ENCODE measurements at regions of chr4 and their contacts with region 1.

Region 1: DNA sequence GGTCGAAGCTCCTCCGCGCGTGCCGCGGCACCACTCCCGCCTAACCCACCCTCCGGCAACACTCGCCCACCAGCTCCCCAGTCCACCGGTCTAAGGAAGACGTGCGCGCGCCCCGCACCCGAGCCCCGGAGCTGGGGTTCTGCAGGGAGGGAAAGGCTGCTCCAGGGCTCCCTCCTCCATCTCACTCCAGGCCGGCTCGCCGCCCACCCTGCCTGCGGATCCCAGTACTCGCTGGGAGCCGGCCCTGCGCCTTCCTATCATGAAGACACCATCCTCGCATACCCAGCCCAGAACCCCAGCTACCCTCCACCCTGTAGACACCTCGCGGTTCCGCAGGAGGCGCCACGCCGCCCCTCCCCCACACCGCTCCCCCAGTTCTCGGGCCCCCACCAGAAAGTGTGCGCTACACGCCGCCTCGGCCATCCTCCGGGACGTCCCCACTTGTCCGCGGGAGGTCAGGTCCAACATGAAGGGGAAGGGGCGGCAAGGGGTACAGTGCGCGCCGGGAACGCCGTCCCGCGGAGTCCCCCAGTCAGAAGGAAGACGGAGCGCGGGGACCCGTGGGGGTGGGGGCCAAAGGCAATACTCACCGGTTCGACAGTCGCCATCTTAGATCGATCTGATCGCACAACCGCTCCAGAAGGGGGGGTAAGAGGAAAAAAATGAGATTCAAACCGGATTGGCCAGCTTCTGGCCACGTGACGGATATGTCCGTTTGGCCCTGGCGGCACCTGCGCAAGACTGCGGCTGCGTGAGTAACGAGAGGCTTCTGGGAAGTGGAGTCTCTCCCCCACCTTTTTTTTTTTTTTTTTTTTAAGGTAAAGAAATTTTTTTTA is at the start of gene EIF4E:
- DNase-seq: peak; percentile 99
- H3K4me3 ChIP-seq: peak within 1 kb of the TSS; percentile 59 to 98 (median 96)
- H3K27ac ChIP-seq: peak within 1 kb of the TSS; percentile 88 to 98 (median 95)
- H3K4me1 ChIP-seq: peaks cover 0 to 30% (median 22%) of the 10 kb centered on the region in 4 donors
- H3K27me3 ChIP-seq: no peaks in the 10 kb centered on the region
- CTCF ChIP-seq: peak in 3 of 4 experiments; percentile 2 to 17 (median 13)
- EP300 ChIP-seq: peak in 1 of 4 donors; percentile 17
- POLR2A ChIP-seq: no peak
- total RNA-seq, gene EIF4E: 38.5 to 81.3 (median 65.4) TPM

Region 2: GRCh38 chr4:98260579-98261290 is 668.0 kb before region 1 on chr4:
- intact Hi-C with region 1: loop called (anchors 5 kb)
- DNase-seq: peak; percentile 97
- H3K4me3 ChIP-seq: peak overlapping the region; percentile 68 to 97 (median 85)
- H3K27ac ChIP-seq: peak overlapping the region; percentile 97 to 98 (median 98)
- H3K4me1 ChIP-seq: peaks cover 0 to 36% (median 25%) of the 10 kb centered on the region in 4 donors
- H3K27me3 ChIP-seq: no peaks in the 10 kb centered on the region
- CTCF ChIP-seq: no peak
- EP300 ChIP-seq: no peak
- POLR2A ChIP-seq: peak; percentile 92 to 93

Region 3: DNA sequence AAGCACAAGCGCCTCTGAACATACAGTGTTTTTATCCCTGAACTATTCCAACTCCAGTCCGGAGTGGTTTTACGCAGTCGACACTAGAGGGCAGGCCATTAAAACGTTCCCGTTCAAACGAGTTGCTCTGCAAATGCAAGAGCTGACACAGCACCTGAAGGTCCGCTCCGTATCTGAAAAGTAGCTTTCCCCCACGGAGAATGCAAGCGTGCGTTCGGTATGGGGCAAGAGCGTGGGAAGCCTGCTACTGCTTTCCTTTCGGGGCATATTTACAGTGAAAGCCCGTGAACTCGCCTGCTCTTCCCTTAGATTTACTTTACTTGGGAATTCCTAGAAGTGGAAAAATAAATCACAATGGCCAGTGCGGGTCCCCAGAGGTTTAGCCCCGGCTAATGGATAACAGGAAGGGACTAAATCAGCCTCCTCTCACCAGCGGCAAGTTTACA is 461.1 kb before region 1 on chr4:
- intact Hi-C with region 1: loop called (anchors 5 kb)
- DNase-seq: peak; percentile 89
- H3K4me3 ChIP-seq: peak overlapping the region in 3 of 4 donors; percentile 25 to 45 (median 42)
- H3K27ac ChIP-seq: peak overlapping the region in 2 of 4 donors; percentile 8 to 23
- H3K4me1 ChIP-seq: peaks cover 0 to 14% (median 12%) of the 10 kb centered on the region in 4 donors
- H3K27me3 ChIP-seq: no peaks in the 10 kb centered on the region
- CTCF ChIP-seq: peak; percentile 64 to 73 (median 69)
- EP300 ChIP-seq: no peak
- POLR2A ChIP-seq: no peak

Region 4: DNA sequence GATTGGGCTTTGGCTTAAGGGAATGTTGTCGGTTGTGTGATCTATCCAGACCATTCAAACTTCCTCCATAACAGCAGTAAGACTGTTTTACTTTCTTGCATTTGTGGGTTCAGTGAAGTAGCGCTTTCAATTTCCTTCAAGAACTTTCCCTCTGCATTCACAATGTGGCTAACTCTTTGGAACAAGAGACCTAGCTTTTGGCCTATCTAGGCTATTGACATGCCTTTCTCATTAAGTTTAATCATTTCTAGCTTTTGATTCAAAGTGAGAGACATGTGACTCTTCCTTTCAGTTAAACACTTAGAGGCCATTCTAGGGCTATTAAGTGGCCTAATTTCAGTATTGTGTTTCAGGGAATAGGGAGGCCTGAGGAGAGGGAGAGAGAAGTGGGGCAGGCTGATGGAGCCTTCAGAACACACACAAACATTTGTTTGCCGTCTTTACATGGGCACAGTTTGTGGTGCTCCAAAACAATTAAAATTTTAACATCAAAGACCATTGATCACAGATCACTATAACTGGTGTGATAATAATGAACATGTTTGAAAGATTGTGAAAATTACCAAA is 125.8 kb after region 1 on chr4:
- intact Hi-C with region 1: loop called (anchors 5 kb)
- DNase-seq: no peak
- H3K4me3 ChIP-seq: no peak overlapping the region
- H3K27ac ChIP-seq: no peak overlapping the region
- H3K4me1 ChIP-seq: peaks cover 0 to 30% (median 18%) of the 10 kb centered on the region in 4 donors
- H3K27me3 ChIP-seq: no peaks in the 10 kb centered on the region
- CTCF ChIP-seq: no peak
- EP300 ChIP-seq: no peak
- POLR2A ChIP-seq: no peak

Region 5: GRCh38 chr4:99894161-99894997 is 965.7 kb after region 1 on chr4 and contains the start of gene LAMTOR3:
- intact Hi-C with region 1: loop called (anchors 10 kb)
- DNase-seq: peak; percentile 96
- H3K4me3 ChIP-seq: peak within 1 kb of the TSS; percentile 73 to 89 (median 84)
- H3K27ac ChIP-seq: peak within 1 kb of the TSS; percentile 86 to 89 (median 88)
- H3K4me1 ChIP-seq: peaks cover 0 to 47% (median 25%) of the 10 kb centered on the region in 4 donors
- H3K27me3 ChIP-seq: no peaks in the 10 kb centered on the region
- CTCF ChIP-seq: no peak
- EP300 ChIP-seq: no peak
- POLR2A ChIP-seq: peak in 1 of 2 donors; percentile 6
- total RNA-seq, gene LAMTOR3: 36.6 to 77.2 (median 62.2) TPM